Lower lobe of right lung (tissue), 2 donors: ENCODE measurements at regions of chr14 and their contacts with region 1.

Region 1: DNA sequence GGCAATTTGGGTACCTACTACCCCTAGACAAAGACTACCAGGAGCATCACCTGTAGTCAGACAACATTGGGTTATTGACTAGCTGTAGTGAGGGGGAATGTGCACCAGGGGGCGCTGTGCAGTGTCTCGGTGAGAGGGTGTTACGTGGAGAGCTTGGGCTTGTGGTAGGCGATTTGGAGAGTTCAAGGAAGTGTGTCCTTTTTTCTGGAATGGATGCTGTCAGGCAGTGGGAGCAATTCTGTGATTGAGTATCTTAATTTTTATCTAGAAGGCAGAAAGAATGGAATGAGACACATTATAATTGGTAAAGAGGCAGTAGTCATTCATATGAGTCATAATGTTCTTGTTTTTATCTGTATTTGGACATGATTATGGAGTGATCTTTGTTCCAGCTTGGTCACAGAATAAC is 187.7 kb downstream of the GALC start:
- DNase-seq: no peak
- ATAC-seq: peak; percentile 61 to 70
- H3K4me3 ChIP-seq: no peak overlapping the region
- H3K27ac ChIP-seq: no peak overlapping the region
- H3K4me1 ChIP-seq: no peaks in the 10 kb centered on the region
- H3K27me3 ChIP-seq: no peaks in the 10 kb centered on the region
- CTCF ChIP-seq: peak; percentile 53

Region 2: DNA sequence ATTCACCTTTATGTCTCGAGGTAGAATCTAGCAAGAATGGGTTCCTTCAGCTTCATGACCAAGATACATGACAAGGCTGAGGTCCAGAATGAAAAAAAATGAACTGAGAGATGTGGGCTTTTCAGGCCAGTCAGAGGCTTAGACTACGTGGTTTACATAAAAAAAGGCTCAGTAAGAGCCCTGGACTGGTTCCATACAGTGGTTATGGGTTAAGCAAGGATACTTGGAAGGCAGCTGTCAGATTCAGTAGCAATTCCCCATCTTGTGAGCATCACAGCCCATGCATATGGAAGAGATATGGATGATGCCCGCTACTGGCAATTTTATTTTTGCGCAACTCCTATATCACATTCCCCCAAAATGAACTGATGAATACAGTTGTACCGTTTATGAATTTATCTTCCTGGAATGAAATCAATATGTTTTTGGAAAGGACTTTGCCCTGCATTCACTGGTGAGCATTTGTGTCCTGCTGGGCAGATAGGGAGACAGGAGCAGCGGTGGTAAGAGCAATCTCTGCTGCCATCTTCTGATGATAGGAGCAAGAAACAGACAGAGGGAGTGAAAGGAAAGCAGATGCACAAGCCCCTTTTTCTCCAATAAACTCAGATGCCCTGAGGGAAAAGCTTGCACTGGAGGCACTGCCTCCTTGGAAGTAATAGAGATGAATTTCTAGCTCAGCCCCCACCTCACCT is 92.8 kb before region 1 on chr14:
- intact Hi-C with region 1: no loop called
- DNase-seq: no peak
- ATAC-seq: no peak
- H3K4me3 ChIP-seq: no peak overlapping the region
- H3K27ac ChIP-seq: no peak overlapping the region
- H3K4me1 ChIP-seq: no peaks in the 10 kb centered on the region
- H3K27me3 ChIP-seq: no peaks in the 10 kb centered on the region
- CTCF ChIP-seq: no peak

Region 3: GRCh38 chr14:87732562-87732961 is 72.8 kb before region 1 on chr14:
- intact Hi-C with region 1: no loop called
- DNase-seq: no peak
- ATAC-seq: no peak
- H3K4me3 ChIP-seq: no peak overlapping the region
- H3K27ac ChIP-seq: no peak overlapping the region
- H3K4me1 ChIP-seq: no peaks in the 10 kb centered on the region
- H3K27me3 ChIP-seq: no peaks in the 10 kb centered on the region
- CTCF ChIP-seq: no peak

Region 4: DNA sequence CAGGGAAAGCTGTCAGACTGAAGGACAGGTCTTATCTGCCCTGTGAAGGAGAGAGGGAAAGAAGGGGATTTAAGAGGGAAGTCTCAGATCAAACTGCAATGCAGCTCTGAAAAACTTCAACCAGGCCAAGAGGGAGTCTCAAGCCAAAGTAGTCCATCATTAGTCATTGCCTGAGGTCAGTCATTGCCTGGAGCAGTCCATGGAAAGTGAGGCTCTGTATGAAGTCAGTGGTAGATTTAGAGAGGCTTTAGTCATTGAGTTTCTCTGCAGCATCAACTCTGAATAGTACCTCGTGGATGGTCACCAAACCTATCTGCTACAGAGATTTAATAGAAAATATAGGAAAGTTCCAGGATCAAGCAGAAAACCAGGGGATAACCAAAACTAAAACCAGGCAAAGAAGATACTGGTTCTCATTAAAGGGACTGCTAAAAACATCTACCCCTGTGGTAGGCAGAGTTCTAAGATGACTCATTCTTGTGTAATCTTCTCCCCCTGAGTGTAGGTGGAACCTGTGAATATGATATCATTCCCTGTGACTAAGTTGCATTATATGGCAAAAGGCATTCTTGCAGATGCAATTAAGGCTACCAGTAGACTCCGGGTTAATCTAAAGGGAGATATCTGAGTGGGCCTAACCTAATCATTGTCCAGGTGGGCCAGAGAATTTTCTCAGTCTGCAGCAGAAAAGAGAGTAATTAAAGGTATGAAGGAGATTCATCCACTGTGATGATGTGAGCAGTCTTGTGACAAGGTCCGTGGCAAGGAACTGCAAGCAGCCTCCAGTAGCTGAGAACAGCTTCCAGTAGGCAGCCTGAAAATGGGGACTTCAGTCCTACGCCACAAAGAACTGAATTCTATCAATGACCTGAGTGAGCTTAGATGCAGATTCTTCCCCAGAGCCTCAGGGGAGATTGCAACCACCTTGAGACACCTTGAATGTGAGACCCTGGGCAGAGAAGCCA is 64.6 kb after region 1 on chr14:
- intact Hi-C with region 1: no loop called
- DNase-seq: no peak
- ATAC-seq: peak in 1 of 2 donors; percentile 29
- H3K4me3 ChIP-seq: no peak overlapping the region
- H3K27ac ChIP-seq: no peak overlapping the region
- H3K4me1 ChIP-seq: no peaks in the 10 kb centered on the region
- H3K27me3 ChIP-seq: peaks cover 6% of the 10 kb centered on the region
- CTCF ChIP-seq: no peak

Region 5: GRCh38 chr14:87896393-87897380 is 91.4 kb after region 1 on chr14:
- intact Hi-C with region 1: loop called (anchors 5 kb)
- DNase-seq: no peak
- ATAC-seq: peak; percentile 56 to 57
- H3K4me3 ChIP-seq: no peak overlapping the region
- H3K27ac ChIP-seq: no peak overlapping the region
- H3K4me1 ChIP-seq: no peaks in the 10 kb centered on the region
- H3K27me3 ChIP-seq: peaks cover 22% of the 10 kb centered on the region
- CTCF ChIP-seq: peak; percentile 64